ENCODE measurements at regions of chr13 and their contacts with region 1.

Region 1: GRCh38 chr13:45873491-45874356 is 22.2 kb upstream of the SIAH3 start:
- DNase-seq: no peak
- ATAC-seq: no peak
- H3K4me3 ChIP-seq: no peak overlapping the region
- H3K4me3 Mint-ChIP-seq: no peak overlapping the region
- H3K27ac ChIP-seq: no peak overlapping the region
- H3K27ac Mint-ChIP-seq: no peak overlapping the region
- H3K4me1 ChIP-seq: no peaks in the 10 kb centered on the region
- H3K4me1 Mint-ChIP-seq: no peaks in the 10 kb centered on the region
- H3K27me3 ChIP-seq: no peaks in the 10 kb centered on the region
- H3K27me3 Mint-ChIP-seq: no peaks in the 10 kb centered on the region
- CTCF ChIP-seq: no peak

Region 2: DNA sequence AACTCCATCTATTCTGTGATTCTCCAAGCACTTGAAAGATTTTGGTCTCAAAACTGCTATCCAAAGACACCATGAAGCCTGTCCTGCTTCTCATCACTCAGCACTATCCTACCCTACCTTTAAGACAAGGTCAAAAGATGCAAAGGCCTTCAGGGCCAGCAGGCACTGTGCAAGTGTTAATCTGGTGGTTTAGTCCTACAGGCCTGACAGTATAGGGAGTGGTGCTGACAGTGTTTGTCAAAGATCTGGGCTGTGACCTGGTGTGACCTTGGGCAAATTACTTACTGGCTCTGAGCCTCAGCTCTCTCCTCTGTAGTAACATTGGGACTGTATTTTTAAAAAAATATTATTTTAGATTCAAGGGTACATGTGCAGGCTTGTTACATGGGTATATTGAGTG is 50.1 kb before region 1 on chr13:
- CTCF ChIA-PET with region 1: no interaction called
- POLR2A ChIA-PET with region 1: no interaction called
- intact Hi-C with region 1: loop called in 1 of 2 experiments (anchors 5 kb)
- DNase-seq: no peak
- ATAC-seq: no peak
- H3K4me3 ChIP-seq: no peak overlapping the region
- H3K4me3 Mint-ChIP-seq: no peak overlapping the region
- H3K27ac ChIP-seq: no peak overlapping the region
- H3K27ac Mint-ChIP-seq: no peak overlapping the region
- H3K4me1 ChIP-seq: no peaks in the 10 kb centered on the region
- H3K4me1 Mint-ChIP-seq: no peaks in the 10 kb centered on the region
- H3K27me3 ChIP-seq: no peaks in the 10 kb centered on the region
- H3K27me3 Mint-ChIP-seq: no peaks in the 10 kb centered on the region
- CTCF ChIP-seq: no peak

Region 3: GRCh38 chr13:45833656-45834375 is 39.9 kb before region 1 on chr13:
- CTCF ChIA-PET with region 1: no interaction called
- POLR2A ChIA-PET with region 1: no interaction called
- intact Hi-C with region 1: no loop called
- DNase-seq: peak in 1 of 14 experiments; percentile 19
- ATAC-seq: no peak
- H3K4me3 ChIP-seq: no peak overlapping the region
- H3K4me3 Mint-ChIP-seq: no peak overlapping the region
- H3K27ac ChIP-seq: no peak overlapping the region
- H3K27ac Mint-ChIP-seq: no peak overlapping the region
- H3K4me1 ChIP-seq: no peaks in the 10 kb centered on the region
- H3K4me1 Mint-ChIP-seq: no peaks in the 10 kb centered on the region
- H3K27me3 ChIP-seq: no peaks in the 10 kb centered on the region
- H3K27me3 Mint-ChIP-seq: no peaks in the 10 kb centered on the region
- CTCF ChIP-seq: no peak

Region 4: GRCh38 chr13:46317120-46317519 is 443.4 kb after region 1 on chr13:
- CTCF ChIA-PET with region 1: no interaction called
- POLR2A ChIA-PET with region 1: no interaction called
- intact Hi-C with region 1: no loop called
- DNase-seq: no peak
- ATAC-seq: no peak
- H3K4me3 ChIP-seq: no peak overlapping the region
- H3K4me3 Mint-ChIP-seq: no peak overlapping the region
- H3K27ac ChIP-seq: no peak overlapping the region
- H3K27ac Mint-ChIP-seq: no peak overlapping the region
- H3K4me1 ChIP-seq: peaks cover 23% of the 10 kb centered on the region
- H3K4me1 Mint-ChIP-seq: peaks cover 77% of the 10 kb centered on the region
- H3K27me3 ChIP-seq: no peaks in the 10 kb centered on the region
- H3K27me3 Mint-ChIP-seq: no peaks in the 10 kb centered on the region
- CTCF ChIP-seq: no peak